Activated CD8-positive, alpha-beta T cell treated with anti-CD3 and anti-CD28 coated beads for 36 hours (primary cell): ENCODE measurements at regions of chr2 and their contacts with region 1.

Region 1: GRCh38 chr2:231452799-231453508 is 11.3 kb downstream of the NCL start:
- DNase-seq: peak; percentile 24
- ATAC-seq: peak; percentile 9
- H3K4me3 Mint-ChIP-seq: peak overlapping the region; percentile 8
- H3K27ac Mint-ChIP-seq: peak overlapping the region; percentile 57
- H3K4me1 Mint-ChIP-seq: peaks cover 24% of the 10 kb centered on the region
- H3K27me3 Mint-ChIP-seq: no peaks in the 10 kb centered on the region
- CTCF ChIP-seq: no peak

Region 2: DNA sequence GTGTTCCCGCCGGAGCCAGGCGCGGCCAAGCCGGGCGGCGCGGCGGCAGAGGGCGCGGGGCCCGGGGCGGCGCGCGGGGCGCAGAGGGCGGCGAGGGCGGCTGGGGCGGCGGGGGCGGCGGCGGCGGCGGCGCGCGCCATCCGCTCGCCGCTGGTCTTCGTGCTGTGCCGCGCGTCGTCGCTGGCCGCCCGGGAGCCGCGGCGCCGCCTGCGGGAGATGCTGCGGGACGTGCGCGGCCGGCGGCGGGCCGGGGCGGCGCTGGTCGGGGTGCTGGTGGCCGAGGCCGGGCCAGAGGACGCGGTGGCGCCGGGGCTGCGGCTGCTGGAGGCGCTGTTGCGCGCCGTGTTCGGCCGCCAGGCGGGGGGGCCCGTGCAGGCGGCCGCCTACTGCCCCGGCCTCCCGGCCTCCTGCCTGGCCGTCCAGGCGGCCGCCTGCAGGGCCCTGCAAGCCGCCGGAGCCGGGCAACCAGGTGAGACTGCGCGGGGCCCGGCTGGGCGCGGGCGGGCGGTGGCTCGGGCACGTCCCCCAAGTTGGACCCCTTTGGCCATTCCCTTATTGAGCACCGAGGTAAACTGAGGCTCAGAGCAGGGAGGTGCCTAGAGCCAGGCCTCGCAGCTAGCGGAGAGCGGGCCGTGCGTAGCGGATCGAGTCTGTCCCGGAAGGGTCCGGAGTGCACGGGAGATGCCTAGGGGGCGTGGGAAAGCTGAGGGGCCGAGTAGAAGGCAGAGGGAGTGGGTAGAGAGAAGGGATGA is 415.0 kb before region 1 on chr2:
- CTCF ChIA-PET with region 1: no interaction called
- POLR2A ChIA-PET with region 1: no interaction called
- intact Hi-C with region 1: no loop called
- DNase-seq: no peak
- ATAC-seq: peak; percentile 38
- H3K4me3 Mint-ChIP-seq: peak overlapping the region; percentile 53
- H3K27ac Mint-ChIP-seq: no peak overlapping the region
- H3K4me1 Mint-ChIP-seq: no peaks in the 10 kb centered on the region
- H3K27me3 Mint-ChIP-seq: peaks cover 57% of the 10 kb centered on the region
- CTCF ChIP-seq: no peak

Region 3: DNA sequence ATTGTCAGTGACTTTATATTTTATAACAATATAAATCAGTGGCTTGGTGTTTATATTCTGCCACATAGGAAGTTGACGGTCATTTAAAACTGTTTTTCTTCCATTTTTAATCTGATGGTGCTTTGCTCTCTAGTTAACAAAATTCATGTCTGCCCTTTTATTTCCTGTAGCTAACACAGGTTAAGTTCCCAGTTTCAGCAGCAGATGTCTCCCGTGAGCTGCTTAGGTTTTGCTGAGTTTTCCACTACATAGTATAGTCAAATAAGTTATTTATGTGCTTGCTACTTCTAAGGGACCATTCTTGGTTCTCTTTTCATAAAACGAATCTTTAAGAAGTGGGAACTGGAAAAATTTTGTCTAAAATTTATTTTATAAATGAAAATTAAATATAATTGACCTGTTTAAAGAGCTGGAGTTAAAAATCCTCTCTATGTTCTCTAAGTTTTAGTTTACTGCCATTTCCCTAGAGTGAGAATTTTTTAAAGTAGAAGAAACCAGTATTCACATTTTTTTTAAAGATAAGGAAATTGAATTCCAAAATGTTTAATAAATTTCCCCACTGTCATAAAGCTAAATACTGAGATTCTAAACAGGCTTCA is 348.7 kb before region 1 on chr2:
- CTCF ChIA-PET with region 1: interaction called, 11 read pairs
- POLR2A ChIA-PET with region 1: interaction called, 4 read pairs
- intact Hi-C with region 1: no loop called
- DNase-seq: peak; percentile 76
- ATAC-seq: peak; percentile 92
- H3K4me3 Mint-ChIP-seq: no peak overlapping the region
- H3K27ac Mint-ChIP-seq: no peak overlapping the region
- H3K4me1 Mint-ChIP-seq: peaks cover 11% of the 10 kb centered on the region
- H3K27me3 Mint-ChIP-seq: no peaks in the 10 kb centered on the region
- CTCF ChIP-seq: peak; percentile 80

Region 4: DNA sequence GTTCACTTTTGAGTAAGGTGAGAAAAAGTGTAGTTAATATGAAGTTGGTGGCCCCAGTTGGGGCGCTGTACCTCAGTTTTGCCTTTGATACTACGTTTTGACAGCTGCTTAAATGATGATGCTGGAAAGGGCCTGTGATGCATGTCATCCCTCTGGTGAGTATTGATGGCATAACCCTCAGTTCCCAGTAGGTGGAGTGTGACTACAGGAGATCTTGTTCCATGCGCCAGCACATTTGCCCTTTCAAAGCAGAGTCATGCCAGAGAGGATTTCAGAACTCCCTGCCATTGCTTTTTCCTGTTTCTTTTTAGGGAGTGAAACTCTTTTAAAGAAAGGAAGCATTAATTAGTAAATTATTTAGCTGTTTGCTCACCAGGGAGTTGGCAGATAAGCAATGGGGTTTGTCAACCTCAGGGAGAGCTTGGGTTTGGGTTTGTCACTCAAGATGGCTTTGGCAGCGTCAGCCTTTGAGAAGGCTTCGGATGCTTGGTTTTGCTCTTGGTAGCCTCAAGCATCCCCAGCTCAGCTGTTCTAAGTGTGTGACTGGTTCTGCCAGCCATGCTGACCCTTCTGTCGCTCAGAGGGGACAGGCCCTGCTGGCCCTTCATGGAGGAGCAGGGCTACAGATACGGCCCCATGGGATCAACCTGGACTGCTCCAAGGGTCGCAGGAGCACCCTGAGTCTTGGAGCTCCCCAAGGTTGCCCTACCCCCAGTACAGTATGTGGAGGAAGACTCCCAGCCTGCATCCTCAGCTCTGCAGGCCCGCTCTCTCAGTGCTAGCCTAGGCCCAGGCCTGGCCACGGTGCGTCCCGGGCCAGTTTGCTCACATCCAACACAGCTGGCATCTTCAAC is 225.4 kb before region 1 on chr2:
- CTCF ChIA-PET with region 1: interaction called, 19 read pairs
- POLR2A ChIA-PET with region 1: interaction called, 25 read pairs
- intact Hi-C with region 1: no loop called
- DNase-seq: peak; percentile 65
- ATAC-seq: peak; percentile 98
- H3K4me3 Mint-ChIP-seq: no peak overlapping the region
- H3K27ac Mint-ChIP-seq: no peak overlapping the region
- H3K4me1 Mint-ChIP-seq: no peaks in the 10 kb centered on the region
- H3K27me3 Mint-ChIP-seq: no peaks in the 10 kb centered on the region
- CTCF ChIP-seq: peak; percentile 66

Region 5: DNA sequence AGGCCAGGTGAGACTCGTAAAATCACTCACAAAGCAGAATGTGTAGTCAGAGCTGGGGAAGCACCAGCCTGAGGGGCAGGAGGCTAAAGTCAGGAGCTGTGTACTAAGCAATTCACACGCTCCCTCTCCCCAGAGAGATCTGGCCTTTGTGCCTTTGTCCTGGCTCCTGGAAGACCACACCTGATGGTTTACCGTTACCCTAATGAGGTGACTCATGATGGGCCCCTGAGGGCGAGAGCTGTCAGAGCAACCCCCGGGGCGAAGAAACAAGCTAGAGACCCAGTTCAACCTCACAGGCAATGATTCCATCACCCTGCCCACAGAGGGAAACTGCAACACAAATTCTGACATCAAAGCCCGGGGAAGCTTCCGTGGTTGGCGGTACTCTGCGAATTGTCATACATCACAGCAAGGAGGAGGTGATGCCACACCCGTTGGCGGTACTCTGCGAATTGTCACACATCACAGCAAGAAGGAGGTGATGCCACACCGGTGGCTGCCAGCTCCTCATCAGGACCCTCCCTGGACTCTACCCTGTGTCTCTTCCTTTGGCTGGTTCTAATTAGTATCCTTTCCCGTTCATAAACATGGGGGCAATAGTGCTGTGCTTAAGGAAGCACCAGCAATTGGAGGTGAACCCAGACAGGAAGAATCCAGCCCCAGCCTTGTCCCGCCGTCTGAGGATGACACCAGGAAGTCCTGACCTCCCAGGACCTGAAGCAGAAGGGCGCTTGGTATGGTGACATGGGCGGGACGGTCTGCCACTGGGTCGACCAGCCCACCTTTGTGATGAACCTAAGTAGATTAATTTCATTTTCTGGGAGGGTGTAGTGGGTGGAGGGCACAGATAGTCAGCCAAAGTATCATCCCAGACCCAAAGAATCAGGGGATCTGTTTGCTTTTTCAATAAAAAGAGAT is 26.9 kb before region 1 on chr2:
- CTCF ChIA-PET with region 1: interaction called, 5 read pairs
- POLR2A ChIA-PET with region 1: interaction called, 11 read pairs
- intact Hi-C with region 1: no loop called
- DNase-seq: peak; percentile 79
- ATAC-seq: peak; percentile 88
- H3K4me3 Mint-ChIP-seq: peak overlapping the region; percentile 38
- H3K27ac Mint-ChIP-seq: peak overlapping the region; percentile 80
- H3K4me1 Mint-ChIP-seq: peaks cover 21% of the 10 kb centered on the region
- H3K27me3 Mint-ChIP-seq: no peaks in the 10 kb centered on the region
- CTCF ChIP-seq: no peak

Region 6: DNA sequence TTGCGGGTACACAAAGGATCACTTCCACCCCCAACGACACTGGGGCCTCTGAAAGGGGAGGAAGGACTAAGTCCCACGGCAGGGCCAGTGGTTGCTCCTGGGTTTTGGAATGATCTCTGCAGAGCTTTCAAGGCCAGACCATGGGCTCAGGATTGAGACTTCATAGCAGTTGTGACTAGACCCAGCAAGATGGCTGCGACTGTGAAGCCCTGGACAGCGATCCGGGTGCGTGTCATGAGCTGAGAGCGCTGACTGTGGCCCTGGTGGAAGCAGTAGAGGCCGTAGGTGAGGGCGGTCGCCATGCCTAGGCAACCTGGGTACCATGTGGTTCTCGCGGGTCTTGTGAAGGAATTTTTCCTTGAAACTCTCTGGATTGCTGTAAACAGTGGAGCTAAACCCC is 16.0 kb before region 1 on chr2:
- CTCF ChIA-PET with region 1: interaction called, 13 read pairs
- POLR2A ChIA-PET with region 1: interaction called, 21 read pairs
- intact Hi-C with region 1: no loop called
- DNase-seq: no peak
- ATAC-seq: no peak
- H3K4me3 Mint-ChIP-seq: no peak overlapping the region
- H3K27ac Mint-ChIP-seq: no peak overlapping the region
- H3K4me1 Mint-ChIP-seq: peaks cover 6% of the 10 kb centered on the region
- H3K27me3 Mint-ChIP-seq: no peaks in the 10 kb centered on the region
- CTCF ChIP-seq: no peak

Region 7: GRCh38 chr2:231463698-231464575 is 11.0 kb after region 1 on chr2 and contains the start of gene NCL:
- CTCF ChIA-PET with region 1: interaction called, 13 read pairs
- POLR2A ChIA-PET with region 1: interaction called, 290 read pairs
- intact Hi-C with region 1: no loop called
- DNase-seq: peak; percentile 89
- ATAC-seq: peak; percentile 47
- H3K4me3 Mint-ChIP-seq: peak within 1 kb of the TSS; percentile 100
- H3K27ac Mint-ChIP-seq: peak within 1 kb of the TSS; percentile 98
- H3K4me1 Mint-ChIP-seq: peaks cover 38% of the 10 kb centered on the region
- H3K27me3 Mint-ChIP-seq: no peaks in the 10 kb centered on the region
- CTCF ChIP-seq: no peak
- total RNA-seq, gene NCL: 1,312 to 1,361 TPM

Region 8: DNA sequence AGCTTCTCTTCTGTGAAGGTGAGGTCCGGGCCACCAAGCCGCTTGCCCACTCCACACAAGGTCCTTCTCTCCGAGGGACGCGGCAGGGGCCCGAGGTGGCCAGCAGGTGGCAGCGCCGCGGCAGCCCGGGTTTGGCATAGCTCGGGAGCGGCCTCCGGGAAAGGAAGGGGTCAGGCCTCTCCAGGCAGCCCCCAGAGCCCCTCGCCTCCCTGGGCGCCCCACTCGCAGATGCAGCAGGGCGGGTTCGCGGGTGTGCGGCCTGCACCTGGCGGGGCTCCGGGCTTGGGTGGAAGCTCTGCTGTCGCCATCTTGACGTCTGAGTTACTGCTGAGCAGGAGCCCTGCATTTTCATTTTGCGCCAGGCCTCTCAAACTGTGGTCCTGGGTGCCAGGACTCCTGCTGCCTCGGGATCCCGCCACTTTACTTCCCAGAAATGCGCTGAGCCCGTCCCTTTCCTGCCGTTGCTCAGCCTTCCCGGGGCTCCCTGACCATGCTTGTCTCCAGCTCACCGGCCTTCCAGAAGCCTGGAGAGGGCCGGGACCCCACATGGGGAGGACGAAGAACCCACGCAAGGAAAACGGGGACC is 29.9 kb after region 1 on chr2:
- CTCF ChIA-PET with region 1: interaction called, 7 read pairs
- POLR2A ChIA-PET with region 1: interaction called, 14 read pairs
- intact Hi-C with region 1: no loop called
- DNase-seq: peak; percentile 80
- ATAC-seq: peak; percentile 85
- H3K4me3 Mint-ChIP-seq: peak overlapping the region; percentile 77
- H3K27ac Mint-ChIP-seq: peak overlapping the region; percentile 90
- H3K4me1 Mint-ChIP-seq: peaks cover 11% of the 10 kb centered on the region
- H3K27me3 Mint-ChIP-seq: no peaks in the 10 kb centered on the region
- CTCF ChIP-seq: peak; percentile 91